Activated CD4-positive, alpha-beta memory T cell treated with anti-CD3 and anti-CD28 coated beads for 36 hours (primary cell): ENCODE measurements at regions of chr16 and their contacts with region 1.

Region 1: DNA sequence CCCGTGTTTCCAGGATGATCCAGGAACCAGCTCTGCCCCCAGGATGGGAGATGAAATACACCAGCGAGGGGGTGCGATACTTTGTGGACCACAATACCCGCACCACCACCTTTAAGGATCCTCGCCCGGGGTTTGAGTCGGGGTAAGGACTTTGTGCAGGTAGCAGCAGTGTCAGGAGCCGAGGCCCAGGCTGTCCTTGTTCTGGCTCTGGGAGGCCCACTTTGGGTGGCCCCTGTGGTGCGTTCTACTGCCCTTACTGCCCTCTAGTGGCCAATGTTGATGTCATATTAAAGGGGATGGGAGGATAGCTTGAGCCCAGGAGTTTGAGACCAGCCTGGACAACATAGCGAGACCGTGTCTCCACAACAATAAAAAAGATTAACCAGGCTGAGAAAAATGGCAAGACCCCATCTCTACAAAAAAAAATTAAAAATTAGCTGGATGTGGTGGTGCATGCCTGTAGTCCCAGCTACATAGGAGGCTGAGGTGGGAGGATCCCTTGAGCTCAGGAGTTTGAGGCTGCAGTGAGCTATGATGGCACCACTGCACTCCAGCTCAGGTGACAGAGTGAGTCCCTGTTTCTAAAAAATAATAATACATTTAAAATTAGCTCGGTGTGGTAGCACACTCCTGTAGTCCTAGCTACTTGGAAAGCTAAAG is 20.9 kb upstream of the CLEC18A start:
- DNase-seq: peak; percentile 39
- H3K4me3 Mint-ChIP-seq: no peak overlapping the region
- H3K27ac Mint-ChIP-seq: no peak overlapping the region
- H3K4me1 Mint-ChIP-seq: no peaks in the 10 kb centered on the region
- H3K27me3 Mint-ChIP-seq: no peaks in the 10 kb centered on the region

Region 2: GRCh38 chr16:69709456-69710084 is 220.7 kb before region 1 on chr16:
- CTCF ChIA-PET with region 1: interaction called, 12 read pairs
- POLR2A ChIA-PET with region 1: no interaction called
- intact Hi-C with region 1: loop called (anchors 1 kb)
- DNase-seq: no peak
- H3K4me3 Mint-ChIP-seq: no peak overlapping the region
- H3K27ac Mint-ChIP-seq: no peak overlapping the region
- H3K4me1 Mint-ChIP-seq: peaks cover 7% of the 10 kb centered on the region
- H3K27me3 Mint-ChIP-seq: no peaks in the 10 kb centered on the region

Region 3: DNA sequence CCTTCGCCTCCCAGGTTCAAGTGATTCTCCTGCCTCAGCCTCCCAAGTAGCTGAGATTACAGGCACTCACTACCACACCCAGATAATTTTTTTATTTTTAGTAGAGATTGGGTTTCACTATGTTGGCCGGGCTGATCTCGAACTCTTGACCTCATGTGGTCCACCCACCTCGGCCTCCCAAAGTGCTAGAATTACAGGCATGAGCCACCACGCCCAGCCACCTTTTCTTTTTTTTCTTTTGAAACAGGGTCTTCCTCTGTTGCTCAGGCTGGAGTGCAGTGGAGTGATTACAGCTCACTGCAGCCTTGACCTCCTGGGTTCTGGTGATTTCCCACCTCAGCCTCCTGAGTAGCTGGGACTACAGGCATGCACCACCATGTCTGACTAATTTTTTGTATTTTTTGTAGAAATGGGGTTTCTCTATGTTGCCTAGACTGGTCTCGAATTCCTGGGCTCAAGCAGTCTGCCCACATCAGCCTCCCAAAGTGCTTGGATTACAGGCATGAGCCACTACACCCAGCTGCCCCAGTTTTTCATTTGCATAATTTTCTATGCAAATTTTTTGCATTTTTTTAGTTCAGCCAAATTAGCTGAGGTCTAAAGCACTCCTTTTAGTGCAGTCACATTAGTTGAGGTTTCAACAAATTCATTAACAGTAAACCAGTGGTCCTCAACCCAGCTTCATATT is 156.8 kb before region 1 on chr16:
- CTCF ChIA-PET with region 1: no interaction called
- POLR2A ChIA-PET with region 1: no interaction called
- intact Hi-C with region 1: no loop called
- DNase-seq: no peak
- H3K4me3 Mint-ChIP-seq: no peak overlapping the region
- H3K27ac Mint-ChIP-seq: peak overlapping the region; percentile 6
- H3K4me1 Mint-ChIP-seq: peaks cover 36% of the 10 kb centered on the region
- H3K27me3 Mint-ChIP-seq: no peaks in the 10 kb centered on the region

Region 4: DNA sequence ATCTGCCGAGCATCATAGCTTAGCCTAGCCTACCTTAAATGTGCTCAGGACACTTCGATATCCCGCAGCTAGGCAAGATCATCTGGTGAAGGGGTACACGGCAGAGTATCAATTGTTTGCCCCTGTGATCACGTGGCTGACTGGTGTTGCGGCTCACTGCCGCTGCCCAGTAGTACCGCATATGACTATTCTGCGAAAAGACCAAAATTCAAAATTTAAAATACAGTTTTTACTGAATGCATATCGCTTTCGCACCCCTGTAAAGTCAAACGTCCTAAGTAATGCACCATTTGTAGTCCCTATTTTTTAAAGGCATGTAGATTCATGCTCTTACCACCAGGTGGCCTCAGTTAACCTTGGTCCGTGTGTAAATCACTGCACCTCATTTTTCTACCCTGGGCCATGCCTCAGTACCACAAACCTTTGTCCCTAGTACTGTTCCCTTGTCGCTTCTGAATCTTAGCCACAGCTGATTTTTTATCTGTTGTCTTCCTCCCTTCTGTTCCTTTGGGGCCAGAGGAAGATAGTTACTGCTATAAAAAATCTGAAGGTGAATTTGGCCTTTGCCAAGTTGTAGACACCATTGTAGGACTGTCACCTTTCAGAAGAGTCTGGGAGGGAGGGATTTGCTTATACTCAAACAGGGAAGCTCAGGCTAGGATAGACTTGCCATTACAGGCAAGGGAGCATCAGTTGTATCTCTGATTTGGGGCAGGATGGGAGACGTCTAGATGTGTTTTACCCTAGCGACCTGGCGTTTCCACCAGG is 133.7 kb before region 1 on chr16:
- CTCF ChIA-PET with region 1: interaction called, 41 read pairs
- POLR2A ChIA-PET with region 1: no interaction called
- intact Hi-C with region 1: loop called (anchors 1 kb)
- DNase-seq: peak; percentile 25
- H3K4me3 Mint-ChIP-seq: no peak overlapping the region
- H3K27ac Mint-ChIP-seq: no peak overlapping the region
- H3K4me1 Mint-ChIP-seq: no peaks in the 10 kb centered on the region
- H3K27me3 Mint-ChIP-seq: no peaks in the 10 kb centered on the region

Region 5: DNA sequence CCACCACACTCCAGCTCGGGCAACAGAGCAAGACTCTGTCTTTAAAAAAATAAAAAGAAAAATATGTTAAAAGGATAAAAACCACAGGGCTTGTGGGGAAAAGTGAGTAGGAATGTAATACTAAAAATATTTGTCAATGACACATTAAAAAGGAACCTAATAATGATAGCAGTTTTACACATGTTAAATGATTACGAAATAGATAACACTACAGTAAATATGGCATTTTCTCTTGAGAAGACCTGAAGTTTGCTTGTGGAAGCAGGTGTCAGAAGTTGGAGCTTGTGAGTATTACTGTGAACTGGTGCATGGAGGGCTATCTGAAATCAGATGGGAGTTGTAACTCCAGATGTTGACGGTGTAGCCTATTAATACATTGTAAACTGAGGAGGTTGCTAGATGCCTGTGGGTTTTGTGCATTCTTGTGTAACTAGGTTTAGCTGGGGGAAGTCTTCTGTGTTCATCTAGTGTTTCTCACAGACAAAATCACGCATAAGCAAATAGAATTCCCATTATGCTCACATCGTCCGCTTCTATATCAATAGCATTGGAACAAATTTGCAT is 23.3 kb before region 1 on chr16:
- CTCF ChIA-PET with region 1: interaction called, 13 read pairs
- POLR2A ChIA-PET with region 1: no interaction called
- intact Hi-C with region 1: no loop called
- DNase-seq: no peak
- H3K4me3 Mint-ChIP-seq: no peak overlapping the region
- H3K27ac Mint-ChIP-seq: no peak overlapping the region
- H3K4me1 Mint-ChIP-seq: no peaks in the 10 kb centered on the region
- H3K27me3 Mint-ChIP-seq: no peaks in the 10 kb centered on the region

Region 6: GRCh38 chr16:69917739-69918138 is 12.5 kb before region 1 on chr16:
- CTCF ChIA-PET with region 1: interaction called, 12 read pairs
- POLR2A ChIA-PET with region 1: no interaction called
- intact Hi-C with region 1: no loop called
- DNase-seq: no peak
- H3K4me3 Mint-ChIP-seq: no peak overlapping the region
- H3K27ac Mint-ChIP-seq: no peak overlapping the region
- H3K4me1 Mint-ChIP-seq: no peaks in the 10 kb centered on the region
- H3K27me3 Mint-ChIP-seq: no peaks in the 10 kb centered on the region

Region 7: GRCh38 chr16:69941251-69942098 is 11.2 kb after region 1 on chr16:
- CTCF ChIA-PET with region 1: interaction called, 13 read pairs
- POLR2A ChIA-PET with region 1: no interaction called
- intact Hi-C with region 1: no loop called
- DNase-seq: no peak
- H3K4me3 Mint-ChIP-seq: no peak overlapping the region
- H3K27ac Mint-ChIP-seq: no peak overlapping the region
- H3K4me1 Mint-ChIP-seq: no peaks in the 10 kb centered on the region
- H3K27me3 Mint-ChIP-seq: no peaks in the 10 kb centered on the region